ENCODE measurements at regions of chr20 and their contacts with region 1.

Region 1: DNA sequence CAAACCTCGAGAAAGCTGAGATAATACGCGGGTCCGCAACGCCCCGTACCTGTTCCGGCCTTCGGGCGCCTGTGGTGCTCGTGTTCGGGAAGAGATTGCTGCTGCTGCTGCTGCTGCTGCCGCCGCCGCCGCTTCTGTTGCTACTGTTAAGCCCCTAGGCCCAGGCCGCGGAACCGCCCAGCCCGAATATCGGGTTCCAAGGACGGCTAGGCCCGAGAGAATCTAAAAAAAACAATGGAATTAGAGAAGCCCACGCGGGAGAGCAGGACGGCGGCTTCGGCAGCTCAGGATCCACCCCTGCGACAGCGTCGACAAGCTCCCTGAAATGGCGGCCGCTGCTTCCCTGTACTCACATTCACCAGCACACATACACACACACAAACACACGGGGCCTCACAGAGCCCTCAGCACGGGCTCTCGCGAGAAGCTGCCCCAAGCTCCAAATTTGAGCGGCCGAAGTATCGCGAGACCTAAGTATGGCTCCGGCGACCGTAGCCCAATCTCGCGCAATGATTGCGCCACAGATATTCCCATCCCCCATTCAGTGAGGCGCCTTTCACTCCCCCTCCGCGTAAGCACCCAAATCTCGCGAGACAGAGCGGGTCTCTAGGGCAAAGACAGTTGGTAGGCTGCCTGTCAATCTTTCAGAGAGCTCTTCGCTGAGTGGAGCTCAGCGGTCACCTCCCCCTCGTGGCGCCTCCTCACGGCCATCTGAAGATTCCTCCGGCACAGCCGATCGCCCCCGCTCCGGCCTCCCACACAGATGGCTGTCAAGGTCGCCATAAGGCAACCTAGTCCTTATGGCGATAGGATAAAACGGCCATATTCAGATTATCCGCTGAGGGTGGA is at the start of gene RBM39:
- DNase-seq: peak; percentile 100
- H3K4me3 Mint-ChIP-seq: peak within 1 kb of the TSS; percentile 91
- H3K27ac Mint-ChIP-seq: peak within 1 kb of the TSS; percentile 100
- H3K4me1 Mint-ChIP-seq: peaks cover 43% of the 10 kb centered on the region
- H3K27me3 Mint-ChIP-seq: peaks cover 4% of the 10 kb centered on the region
- total RNA-seq, gene RBM39: 352 and 354 TPM in 2 replicates

Region 2: GRCh38 chr20:35629427-35630145 is 112.5 kb before region 1 on chr20:
- intact Hi-C with region 1: no loop called
- DNase-seq: no peak
- H3K4me3 Mint-ChIP-seq: no peak overlapping the region
- H3K27ac Mint-ChIP-seq: no peak overlapping the region
- H3K4me1 Mint-ChIP-seq: peaks cover 2% of the 10 kb centered on the region
- H3K27me3 Mint-ChIP-seq: no peaks in the 10 kb centered on the region

Region 3: GRCh38 chr20:35729836-35730582 is 12.1 kb before region 1 on chr20:
- intact Hi-C with region 1: loop called (anchors 1 kb)
- DNase-seq: no peak
- H3K4me3 Mint-ChIP-seq: no peak overlapping the region
- H3K27ac Mint-ChIP-seq: no peak overlapping the region
- H3K4me1 Mint-ChIP-seq: peaks cover 26% of the 10 kb centered on the region
- H3K27me3 Mint-ChIP-seq: no peaks in the 10 kb centered on the region

Region 4: GRCh38 chr20:35757098-35757705 is 15.1 kb after region 1 on chr20:
- intact Hi-C with region 1: no loop called
- DNase-seq: no peak
- H3K4me3 Mint-ChIP-seq: no peak overlapping the region
- H3K27ac Mint-ChIP-seq: no peak overlapping the region
- H3K4me1 Mint-ChIP-seq: peaks cover 2% of the 10 kb centered on the region
- H3K27me3 Mint-ChIP-seq: peaks cover 9% of the 10 kb centered on the region

Region 5: DNA sequence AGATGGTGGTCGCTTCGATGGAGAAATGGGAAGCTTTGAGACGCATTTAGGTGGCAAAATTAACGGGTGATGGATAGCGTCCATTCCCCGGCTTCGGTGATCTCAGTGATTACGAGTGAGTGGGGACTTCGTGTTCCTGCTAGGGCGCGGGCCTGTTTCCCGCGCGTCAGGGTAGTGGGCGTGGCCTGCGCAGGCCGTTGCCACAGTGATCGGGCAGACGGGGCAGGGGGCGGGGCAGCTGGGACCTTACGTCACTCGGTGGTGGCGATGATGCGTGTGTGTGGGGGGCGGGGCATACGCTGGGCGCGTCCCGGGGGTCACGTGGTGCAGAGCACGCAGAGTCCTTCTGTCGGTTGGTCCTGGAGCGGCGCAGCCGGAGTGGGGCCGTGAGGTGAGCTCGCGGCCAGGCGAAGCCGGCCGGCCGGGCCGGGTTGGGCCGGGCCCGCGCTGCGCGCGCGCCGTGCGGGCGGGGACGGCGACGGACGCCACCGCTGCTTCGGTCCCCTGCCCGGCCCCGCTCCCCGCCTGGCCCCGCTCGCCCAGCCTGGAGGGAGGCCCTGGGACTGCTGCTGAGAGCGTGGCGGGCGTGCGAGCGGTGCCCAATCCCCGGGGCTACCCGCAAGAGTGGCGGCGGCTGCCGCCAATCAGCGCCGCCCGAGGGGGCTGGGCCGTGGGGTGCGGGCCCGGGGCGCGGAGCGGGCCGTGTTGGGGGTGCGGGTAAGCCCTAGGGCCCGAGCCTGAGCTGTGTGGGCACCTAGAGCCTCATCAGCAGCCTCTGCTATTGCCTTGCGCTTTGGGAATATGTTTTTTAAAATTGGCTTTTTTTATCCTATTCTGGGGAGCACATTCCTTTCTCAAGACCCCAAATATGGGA is 29.8 kb after region 1 on chr20 and contains the start of gene PHF20:
- intact Hi-C with region 1: loop called (anchors 1 kb)
- DNase-seq: peak; percentile 99
- H3K4me3 Mint-ChIP-seq: peak within 1 kb of the TSS; percentile 81
- H3K27ac Mint-ChIP-seq: peak within 1 kb of the TSS; percentile 93
- H3K4me1 Mint-ChIP-seq: peaks cover 51% of the 10 kb centered on the region
- H3K27me3 Mint-ChIP-seq: no peaks in the 10 kb centered on the region
- total RNA-seq, gene PHF20: 53.8 and 62.9 TPM in 2 replicates